Posterior vena cava (tissue), 2 donors: ENCODE measurements at regions of chr10 and their contacts with region 1.

Region 1: DNA sequence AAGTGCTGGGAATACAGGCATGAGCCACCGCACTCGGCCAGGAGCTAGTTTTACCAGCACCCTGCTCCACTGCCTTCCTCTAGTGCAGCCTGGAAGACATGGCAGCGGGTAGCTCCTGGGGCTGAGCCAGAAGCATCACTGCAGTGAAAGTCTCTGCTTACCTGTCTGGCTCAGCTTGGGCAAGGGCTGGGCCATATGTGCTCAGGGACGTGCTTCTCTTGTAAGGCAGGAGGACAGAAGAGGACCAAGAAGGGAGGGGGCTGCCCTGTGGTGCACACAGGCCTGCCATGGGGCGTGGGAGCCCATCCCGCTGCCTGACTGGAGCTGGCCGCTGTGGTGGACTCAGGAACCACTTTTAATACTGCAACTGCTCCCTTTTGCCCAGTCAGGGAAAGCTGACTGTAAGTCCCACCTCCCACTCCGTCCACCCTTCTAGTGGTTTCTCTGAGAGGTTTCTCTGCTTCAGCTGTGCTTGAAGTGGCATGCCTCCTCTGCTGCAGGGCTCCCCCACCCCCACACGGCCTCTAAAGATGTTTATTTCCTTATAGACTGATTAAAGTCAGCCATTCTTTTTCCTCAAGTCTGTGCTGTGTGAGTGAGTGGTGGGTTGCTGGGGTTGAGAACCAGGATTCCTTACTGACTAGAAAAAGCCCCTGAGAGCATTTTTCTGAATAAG is 25.3 kb upstream of the C10orf95 start:
- DNase-seq: no peak

Region 2: DNA sequence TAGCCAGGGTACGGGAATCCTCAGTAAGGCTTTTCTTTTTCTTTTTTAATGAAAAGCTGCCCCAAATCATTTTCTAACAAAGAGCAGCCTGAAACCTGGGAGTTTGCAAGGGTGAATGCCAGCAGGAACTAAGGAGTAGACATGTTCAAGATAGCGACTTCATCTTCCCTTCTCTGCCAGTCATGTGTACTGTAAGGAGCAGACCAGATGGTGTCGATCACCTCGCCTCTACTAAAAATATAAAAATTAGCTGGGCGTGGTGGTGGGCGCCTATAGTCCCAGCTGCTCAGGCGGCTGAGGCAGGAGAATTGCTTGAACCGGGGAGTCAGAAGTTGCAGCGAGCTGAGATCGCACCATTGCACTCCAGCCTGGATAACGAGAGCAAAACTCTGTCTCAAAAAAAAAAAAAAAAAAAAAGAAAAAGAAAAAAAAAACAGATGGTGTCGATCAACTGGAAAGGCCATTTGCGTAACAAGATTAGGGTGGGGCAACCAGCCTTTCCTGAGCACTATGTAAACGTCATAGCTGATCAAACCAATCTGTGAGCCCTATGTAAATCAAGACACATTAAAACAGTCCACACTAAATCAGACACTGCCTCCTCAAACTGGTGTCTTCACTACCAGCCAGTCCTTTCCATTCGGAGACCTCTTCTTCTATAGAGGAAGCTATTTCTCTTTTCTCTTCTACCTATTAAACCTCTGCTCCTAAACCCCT is 290.6 kb before region 1 on chr10:
- intact Hi-C with region 1: loop called in 1 of 2 experiments (anchors 5 kb)
- DNase-seq: no peak

Region 3: GRCh38 chr10:102393246-102394078 is 83.1 kb before region 1 on chr10:
- intact Hi-C with region 1: loop called in 1 of 2 experiments (anchors 2 kb)
- DNase-seq: no peak

Region 4: DNA sequence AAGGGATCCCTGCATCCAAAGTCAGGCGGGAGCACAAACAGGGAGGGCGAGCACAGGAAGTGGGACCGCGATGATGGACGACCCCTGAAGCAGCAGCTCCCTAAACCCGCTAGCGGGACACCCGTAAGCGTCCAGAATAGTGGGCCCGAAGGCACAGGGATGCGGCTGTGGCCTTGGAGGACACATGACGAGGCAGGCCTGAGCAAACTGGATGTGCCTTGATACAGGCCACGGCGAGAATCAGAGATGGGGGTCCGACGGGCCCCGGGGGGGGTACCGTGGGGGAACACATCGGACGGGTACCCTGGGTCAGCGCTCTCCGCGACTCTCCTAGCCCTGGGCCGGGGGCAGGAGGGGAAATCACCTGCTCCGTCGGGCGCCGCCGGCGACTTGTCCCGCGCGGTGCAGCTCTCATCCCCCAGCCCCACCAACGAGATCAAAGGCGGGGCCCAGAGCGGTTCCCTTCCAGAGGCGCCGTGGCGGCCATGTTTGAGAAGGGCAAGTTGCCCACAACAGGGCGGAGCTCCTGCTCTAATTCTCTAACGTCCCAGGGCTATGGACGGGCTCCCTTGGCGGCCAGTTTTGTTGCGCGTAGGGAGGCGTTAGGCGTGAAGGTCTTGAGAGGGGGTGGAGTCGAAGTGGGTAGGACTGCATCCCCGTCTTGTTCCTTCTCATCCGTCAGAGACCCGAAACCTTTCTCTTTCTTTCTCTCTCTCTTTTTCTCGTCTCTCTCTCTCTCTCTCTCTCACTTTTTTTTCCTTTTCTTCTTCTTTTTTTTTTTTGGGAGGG is 44.2 kb before region 1 on chr10 and contains the start of gene CUEDC2:
- intact Hi-C with region 1: no loop called
- DNase-seq: peak; percentile 99
- total RNA-seq, gene CUEDC2: 35.7 to 40.9 TPM

Region 5: DNA sequence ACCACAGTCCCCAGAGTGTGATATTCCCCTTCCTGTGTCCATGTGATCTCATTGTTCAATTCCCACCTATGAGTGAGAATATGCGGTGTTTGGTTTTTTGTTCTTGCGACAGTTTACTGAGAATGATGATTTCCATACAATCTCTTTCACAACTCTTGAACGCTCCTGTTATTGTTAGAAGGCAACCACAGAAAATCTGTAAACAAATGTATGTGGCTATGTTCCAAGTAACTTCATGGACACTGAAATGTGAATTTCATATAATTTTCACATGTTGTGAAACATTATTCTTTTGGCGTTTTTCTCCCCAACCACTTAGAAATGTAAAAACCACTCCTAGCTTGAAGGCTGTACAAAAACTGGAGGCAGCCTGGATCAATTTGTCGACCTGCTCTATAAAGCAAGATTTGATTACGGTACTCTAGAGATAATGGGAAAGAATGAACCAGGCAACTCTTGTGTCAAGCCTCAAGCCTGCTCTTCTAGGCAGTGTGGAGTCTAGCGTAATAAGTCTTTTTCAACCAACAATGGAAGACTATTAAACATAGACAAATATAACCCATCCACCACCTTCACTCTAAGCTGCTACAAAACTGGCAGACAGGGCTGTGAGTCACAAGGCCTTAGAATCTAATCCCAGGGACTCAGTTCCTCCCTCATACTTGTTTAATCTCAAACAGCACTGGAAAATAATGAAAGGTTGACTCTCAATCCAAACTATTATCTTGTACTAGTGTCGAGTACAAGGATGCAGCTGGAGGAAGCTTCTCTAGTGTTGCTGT is 214.9 kb after region 1 on chr10:
- intact Hi-C with region 1: no loop called
- DNase-seq: no peak

Region 6: GRCh38 chr10:103820101-103821062 is 1343.8 kb after region 1 on chr10:
- intact Hi-C with region 1: no loop called
- DNase-seq: peak; percentile 91